ENCODE measurements at regions of chr10 and their contacts with region 1.

Region 1: DNA sequence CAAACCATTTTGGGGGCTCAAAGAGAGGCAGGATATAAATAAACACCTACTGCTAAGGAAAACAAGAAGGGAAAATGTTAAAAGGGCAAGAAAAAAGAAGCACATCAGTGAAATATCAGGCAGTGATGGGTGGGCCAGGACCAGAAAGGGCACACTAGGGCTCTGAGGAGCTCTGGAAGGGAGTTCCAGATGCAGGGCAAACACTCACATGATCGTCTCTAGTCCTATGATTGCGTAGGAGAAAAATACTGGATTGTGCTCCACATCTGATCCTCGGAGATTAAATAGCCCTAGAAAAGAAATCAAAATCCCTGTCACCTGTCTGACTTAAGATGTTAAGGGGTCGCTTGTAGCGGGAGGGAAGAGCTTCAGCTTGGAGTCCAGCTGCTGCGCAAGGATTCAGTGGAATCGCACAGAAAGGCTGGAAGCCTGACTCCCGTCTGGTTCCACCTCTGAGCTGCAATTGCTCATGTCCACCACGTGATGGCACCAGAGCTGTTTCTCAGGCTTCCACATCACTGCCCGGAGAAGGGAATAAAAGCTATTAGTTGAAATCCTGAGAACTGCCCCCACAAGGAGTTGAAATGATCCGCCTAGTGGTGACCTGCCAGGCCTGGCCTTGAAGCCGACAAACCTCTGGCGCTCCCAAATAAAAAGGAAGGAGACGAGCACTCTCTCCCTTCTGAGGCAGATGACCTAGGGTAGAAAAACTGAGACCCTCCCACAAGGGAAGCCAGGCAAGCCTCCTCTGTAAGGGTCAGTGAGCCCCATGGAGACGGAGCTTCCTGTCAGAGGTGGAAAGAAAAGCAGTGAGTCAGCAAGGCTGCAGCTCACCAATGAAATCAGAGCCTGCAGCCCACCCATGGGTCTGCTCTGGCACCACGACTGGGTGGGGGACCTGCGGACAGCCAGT is 39.2 kb downstream of the XPNPEP1 start:
- DNase-seq: peak; percentile 71 to 87
- H3K4me3 ChIP-seq: peak overlapping the region in 1 of 2 donors; percentile 14
- H3K27ac ChIP-seq: peak overlapping the region; percentile 54 to 73
- H3K4me1 ChIP-seq: peaks cover 5 to 12% (median 8%) of the 10 kb centered on the region in 4 donors
- H3K27me3 ChIP-seq: no peaks in the 10 kb centered on the region
- CTCF ChIP-seq: peak; percentile 96

Region 2: DNA sequence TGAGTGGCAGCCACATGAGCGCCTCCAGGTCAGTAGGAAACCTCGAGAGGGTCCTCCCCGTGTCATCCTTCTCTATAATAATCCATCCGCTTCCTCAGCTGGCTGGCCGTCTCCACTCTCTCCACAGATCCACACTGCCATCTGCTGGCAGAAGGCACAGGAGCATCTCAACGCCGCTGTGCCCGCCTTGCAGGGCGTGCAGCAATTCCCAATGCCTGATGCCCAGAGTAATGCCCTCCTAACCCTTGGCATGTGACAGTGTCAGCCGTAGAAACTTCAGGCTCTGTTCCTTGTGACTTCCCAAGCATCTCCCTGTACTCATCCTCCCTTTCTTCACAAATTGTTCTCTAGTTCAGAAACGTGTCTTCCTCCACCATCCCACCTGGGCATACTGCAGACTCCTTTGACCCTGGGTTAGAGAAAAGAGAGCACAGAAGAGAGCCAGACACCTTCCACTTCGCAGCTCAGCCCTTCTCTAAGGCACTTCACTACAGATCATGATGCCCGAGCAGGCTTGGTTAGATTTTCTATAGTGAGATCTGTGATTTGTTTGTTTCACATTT is 31.6 kb before region 1 on chr10:
- intact Hi-C with region 1: no loop called
- DNase-seq: peak; percentile 71 to 80
- H3K4me3 ChIP-seq: no peak overlapping the region
- H3K27ac ChIP-seq: no peak overlapping the region
- H3K4me1 ChIP-seq: peaks cover 0 to 6% (median 5%) of the 10 kb centered on the region in 4 donors
- H3K27me3 ChIP-seq: no peaks in the 10 kb centered on the region
- CTCF ChIP-seq: peak; percentile 78 to 91

Region 3: GRCh38 chr10:109922976-109923921 is 39.1 kb after region 1 on chr10 and contains the start of gene XPNPEP1:
- intact Hi-C with region 1: loop called (anchors 5 kb)
- DNase-seq: peak; percentile 87 to 94
- H3K4me3 ChIP-seq: peak within 1 kb of the TSS; percentile 80 to 99
- H3K27ac ChIP-seq: peak within 1 kb of the TSS; percentile 84 to 97
- H3K4me1 ChIP-seq: peaks cover 0 to 22% (median 17%) of the 10 kb centered on the region in 4 donors
- H3K27me3 ChIP-seq: no peaks in the 10 kb centered on the region
- CTCF ChIP-seq: no peak

Region 4: GRCh38 chr10:109966961-109967738 is 83.0 kb after region 1 on chr10:
- intact Hi-C with region 1: loop called (anchors 10 kb)
- DNase-seq: no peak
- H3K4me3 ChIP-seq: no peak overlapping the region
- H3K27ac ChIP-seq: peak overlapping the region in 1 of 2 donors; percentile 31
- H3K4me1 ChIP-seq: peaks cover 0 to 42% (median 24%) of the 10 kb centered on the region in 4 donors
- H3K27me3 ChIP-seq: no peaks in the 10 kb centered on the region
- CTCF ChIP-seq: no peak

Region 5: DNA sequence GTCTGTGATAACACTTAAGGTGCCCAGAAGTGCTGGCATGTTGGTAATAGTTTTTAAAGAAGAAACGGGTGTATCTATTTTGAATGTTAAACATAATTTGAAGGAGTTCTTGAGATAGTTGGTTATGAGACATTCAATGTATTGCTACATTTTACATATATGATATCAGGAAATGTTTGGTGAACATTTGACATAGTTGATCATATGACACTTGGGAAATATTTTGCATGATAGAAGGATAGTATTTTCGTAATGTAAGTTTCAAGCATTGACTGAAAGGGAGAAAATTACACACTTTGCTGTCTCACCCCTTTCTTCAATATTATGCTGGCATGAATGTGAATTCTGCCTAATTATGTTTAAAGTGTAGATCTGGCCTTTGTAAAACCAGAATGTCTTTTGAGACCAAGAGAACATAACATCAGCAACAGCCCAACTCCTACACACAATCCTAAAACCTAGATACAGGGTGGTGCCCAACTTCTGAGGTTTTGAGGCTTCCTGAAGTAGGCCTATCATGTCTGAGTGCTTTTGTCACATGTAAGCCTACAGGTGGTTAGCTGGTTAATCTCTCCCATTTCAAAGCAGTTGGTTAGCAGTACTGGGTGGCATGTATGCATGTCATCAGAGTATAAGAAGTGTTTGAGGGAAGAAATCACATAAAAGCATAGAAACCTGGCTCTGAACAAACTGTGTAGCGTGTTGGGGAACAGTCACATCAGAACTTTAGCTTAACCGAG is 125.8 kb after region 1 on chr10:
- intact Hi-C with region 1: loop called (anchors 5 kb)
- DNase-seq: no peak
- H3K4me3 ChIP-seq: peak overlapping the region; percentile 91 to 97
- H3K27ac ChIP-seq: peak overlapping the region; percentile 53 to 98
- H3K4me1 ChIP-seq: peaks cover 0 to 50% (median 21%) of the 10 kb centered on the region in 4 donors
- H3K27me3 ChIP-seq: no peaks in the 10 kb centered on the region
- CTCF ChIP-seq: no peak

Region 6: DNA sequence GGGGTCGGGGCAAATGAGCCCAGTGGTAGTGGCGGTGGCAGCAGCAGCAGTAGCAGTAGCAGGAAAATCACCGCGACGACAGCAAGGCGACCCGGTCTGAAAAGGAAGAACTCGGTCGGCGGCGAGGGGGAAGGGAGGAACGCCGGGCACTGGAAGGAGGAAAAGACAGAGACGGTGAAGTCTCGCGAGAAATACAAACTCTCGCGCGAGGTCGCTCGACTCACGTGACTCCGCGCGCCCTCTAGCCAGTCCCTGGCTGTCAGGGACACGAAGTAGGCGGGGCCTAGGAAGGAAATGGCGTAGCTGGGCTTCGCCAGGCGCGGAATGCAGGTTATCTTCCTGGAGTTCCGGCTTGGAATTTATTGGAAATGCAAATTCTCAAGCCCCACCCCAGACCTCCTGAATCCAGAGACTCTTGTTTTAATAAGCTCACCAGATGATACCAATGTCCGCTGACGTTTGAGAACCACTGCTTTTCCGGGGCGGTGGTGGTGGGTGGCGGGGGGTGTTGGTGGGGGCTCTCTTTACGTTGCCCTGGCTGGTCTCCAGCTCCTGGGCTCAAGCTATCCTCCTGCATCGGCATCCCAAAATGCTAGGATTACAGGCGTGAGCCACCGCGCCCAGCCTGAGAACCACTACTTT is 420.8 kb after region 1 on chr10 and contains the start of gene SMNDC1:
- intact Hi-C with region 1: loop called (anchors 10 kb)
- DNase-seq: peak; percentile 96 to 99
- H3K4me3 ChIP-seq: peak within 1 kb of the TSS; percentile 97 to 98
- H3K27ac ChIP-seq: peak within 1 kb of the TSS; percentile 92 to 93
- H3K4me1 ChIP-seq: peaks cover 0 to 48% (median 34%) of the 10 kb centered on the region in 4 donors
- H3K27me3 ChIP-seq: no peaks in the 10 kb centered on the region
- CTCF ChIP-seq: peak in 1 of 2 experiments; percentile 7